ENCODE measurements at regions of chr2 and their contacts with region 1.

Region 1: DNA sequence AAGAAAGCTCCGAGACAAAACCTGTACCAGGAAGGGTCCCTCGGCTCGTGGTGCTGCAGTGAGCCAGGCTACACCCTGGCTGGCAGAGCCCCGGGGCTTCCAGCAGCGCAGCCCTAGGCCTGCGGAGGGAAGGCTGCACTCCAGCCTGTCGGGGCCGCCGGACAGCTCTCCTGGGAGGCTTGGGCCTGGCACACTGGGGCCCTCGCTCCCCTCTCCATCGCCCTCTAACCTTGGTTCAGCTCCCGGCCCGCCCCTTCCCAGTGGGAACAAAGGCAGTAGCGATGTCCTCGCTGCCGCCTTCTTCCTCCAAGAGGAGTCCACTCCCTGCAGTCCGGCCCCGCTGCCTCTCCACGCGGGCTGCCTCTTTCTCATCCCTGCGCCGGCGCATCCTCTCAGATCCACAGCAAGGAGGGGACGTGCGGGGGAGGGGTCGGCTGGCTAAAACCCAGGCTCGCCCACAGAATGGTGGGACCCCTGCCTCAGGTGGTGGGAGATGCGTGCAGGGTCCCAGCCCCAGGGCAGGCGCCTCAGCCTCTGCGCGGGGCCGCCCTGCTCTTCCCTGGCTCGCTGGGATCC is 138.1 kb downstream of the TWIST2 start:
- DNase-seq: no peak
- H3K4me3 ChIP-seq: no peak overlapping the region
- H3K27ac ChIP-seq: no peak overlapping the region
- H3K4me1 ChIP-seq: no peaks in the 10 kb centered on the region
- CTCF ChIP-seq: no peak

Region 2: GRCh38 chr2:239500574-239501550 is 514.9 kb after region 1 on chr2:
- CTCF ChIA-PET with region 1: no interaction called
- POLR2A ChIA-PET with region 1: interaction called, 10 read pairs
- intact Hi-C with region 1: no loop called
- DNase-seq: no peak
- H3K4me3 ChIP-seq: no peak overlapping the region
- H3K27ac ChIP-seq: no peak overlapping the region
- H3K4me1 ChIP-seq: no peaks in the 10 kb centered on the region
- CTCF ChIP-seq: no peak

Region 3: GRCh38 chr2:239666855-239667376 is 681.0 kb after region 1 on chr2:
- CTCF ChIA-PET with region 1: no interaction called
- POLR2A ChIA-PET with region 1: no interaction called
- intact Hi-C with region 1: no loop called
- DNase-seq: no peak
- H3K4me3 ChIP-seq: no peak overlapping the region
- H3K27ac ChIP-seq: no peak overlapping the region
- H3K4me1 ChIP-seq: no peaks in the 10 kb centered on the region
- CTCF ChIP-seq: no peak